ENCODE measurements at regions of chr18 and their contacts with region 1.

Region 1: DNA sequence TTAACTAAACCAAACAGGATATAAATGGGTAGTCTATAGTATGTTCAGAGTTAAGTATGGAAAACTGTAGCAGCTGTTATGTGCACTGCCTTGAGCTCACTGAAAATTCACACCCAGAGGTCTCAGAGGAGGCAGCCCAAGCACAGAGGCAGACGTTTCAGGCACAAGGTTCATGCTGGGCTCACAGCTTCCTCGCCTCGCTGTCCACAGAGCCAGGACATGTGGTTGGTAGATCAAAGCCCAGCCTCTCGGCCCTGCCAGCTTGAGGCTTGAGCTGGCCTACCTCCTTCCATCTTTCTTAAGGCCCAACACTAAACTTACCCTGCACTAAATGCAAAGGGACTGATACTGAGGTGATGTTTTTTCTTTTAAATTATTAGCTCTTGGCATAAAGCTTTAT is 43.7 kb downstream of the PRELID3A start:
- DNase-seq: no peak
- ATAC-seq: no peak
- H3K4me3 ChIP-seq: no peak overlapping the region
- H3K27ac ChIP-seq: no peak overlapping the region
- H3K4me1 ChIP-seq: no peaks in the 10 kb centered on the region
- H3K27me3 ChIP-seq: no peaks in the 10 kb centered on the region
- CTCF ChIP-seq: no peak

Region 2: DNA sequence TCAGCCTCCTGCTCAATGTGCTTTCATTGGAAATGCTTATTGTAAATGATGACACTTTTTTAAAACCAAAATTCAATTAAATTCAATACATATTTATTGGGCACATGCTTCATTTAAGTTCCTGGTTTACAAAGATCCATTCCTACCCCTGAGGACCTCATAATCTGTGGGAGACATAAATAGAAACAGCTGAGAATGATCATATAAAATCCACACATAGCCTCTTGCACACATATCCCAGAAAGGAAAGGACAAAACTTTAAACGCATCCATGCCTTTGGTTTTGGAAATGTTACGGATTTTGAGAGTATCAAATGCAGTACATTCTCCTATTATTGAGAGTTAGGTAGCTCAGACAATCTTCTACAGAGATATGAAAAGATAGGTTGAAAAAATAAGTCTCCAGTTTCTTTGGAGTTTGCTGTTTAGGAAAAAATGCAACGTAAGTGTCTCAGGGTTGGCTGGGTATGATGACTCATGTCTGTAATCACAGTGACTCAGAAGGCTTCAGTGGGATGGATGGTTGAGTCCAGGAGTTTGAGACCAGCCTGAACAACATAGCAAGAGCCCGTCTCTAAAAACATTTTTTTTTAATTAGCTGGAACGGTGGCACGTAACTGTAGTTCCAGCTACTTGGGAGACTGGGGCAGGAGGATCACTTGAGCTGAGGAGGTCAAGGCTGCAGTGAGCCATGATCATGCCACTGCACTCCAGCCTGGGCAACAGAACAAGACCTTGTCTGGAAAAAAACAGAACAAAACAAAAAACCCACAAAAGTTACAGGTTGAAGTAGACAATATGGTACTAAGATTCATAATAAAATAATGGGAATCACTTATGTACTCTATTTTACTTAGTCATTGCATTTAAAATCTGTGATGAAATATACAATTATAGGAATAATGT is 47.6 kb before region 1 on chr18:
- CTCF ChIA-PET with region 1: no interaction called
- POLR2A ChIA-PET with region 1: interaction called, 22 read pairs
- intact Hi-C with region 1: no loop called
- DNase-seq: peak; percentile 88
- ATAC-seq: peak; percentile 28
- H3K4me3 ChIP-seq: no peak overlapping the region
- H3K27ac ChIP-seq: peak overlapping the region; percentile 38
- H3K4me1 ChIP-seq: peaks cover 27% of the 10 kb centered on the region
- H3K27me3 ChIP-seq: 0 out of 2 replicates have a peak, but pooled peaks cover 4% of the 10 kb centered on the region
- CTCF ChIP-seq: no peak